ENCODE measurements at regions of chr11 and their contacts with region 1.

Region 1: DNA sequence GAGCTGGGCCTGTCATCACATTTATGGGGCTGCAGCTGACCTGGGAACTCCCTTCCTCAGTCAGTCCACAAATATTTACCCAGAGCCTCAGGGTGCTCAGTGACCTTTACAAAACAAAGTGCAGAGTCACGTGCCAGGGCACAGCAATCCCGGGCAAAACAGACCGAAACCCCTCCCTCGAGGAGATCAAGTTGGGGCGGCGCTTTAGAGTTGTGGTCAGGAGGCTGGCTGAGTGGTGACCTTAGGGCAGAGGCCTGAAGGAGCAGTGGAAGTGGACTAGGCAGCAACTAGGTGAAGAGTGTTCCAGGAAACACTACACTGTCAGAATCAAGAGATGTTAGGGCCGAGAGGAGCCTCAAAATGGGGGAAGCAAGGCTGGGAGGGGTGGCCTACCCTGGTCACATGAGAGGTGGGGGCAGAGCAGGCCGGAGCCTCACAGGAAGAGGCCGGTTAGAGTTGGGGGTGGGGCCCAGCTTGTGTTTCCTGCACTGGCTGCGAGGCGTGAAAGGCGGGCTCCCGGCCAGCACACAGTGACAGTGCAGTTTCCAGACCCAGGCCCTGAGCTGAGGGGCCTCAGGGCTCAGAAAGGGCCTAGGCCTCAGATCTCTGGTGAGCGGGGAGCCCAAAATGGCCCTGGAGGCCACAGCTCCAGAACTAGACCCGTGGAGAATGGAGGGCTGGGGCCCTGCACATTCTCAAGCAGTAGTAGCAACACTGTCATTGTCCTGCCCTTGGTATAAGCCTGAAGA is 3.7 kb upstream of the NEAT1 start:
- DNase-seq: peak; percentile 91
- ATAC-seq: peak; percentile 57
- H3K4me3 ChIP-seq: peak overlapping the region; percentile 79
- H3K27ac ChIP-seq: peak overlapping the region; percentile 100
- H3K4me1 ChIP-seq: peaks cover 51% of the 10 kb centered on the region
- H3K27me3 ChIP-seq: no peaks in the 10 kb centered on the region
- CTCF ChIP-seq: no peak
- EP300 ChIP-seq: peak; percentile 39 to 52; a peak in 3 of 4 replicates
- POLR2A ChIP-seq: peak; percentile 80
- RAD21 ChIP-seq: no peak

Region 2: DNA sequence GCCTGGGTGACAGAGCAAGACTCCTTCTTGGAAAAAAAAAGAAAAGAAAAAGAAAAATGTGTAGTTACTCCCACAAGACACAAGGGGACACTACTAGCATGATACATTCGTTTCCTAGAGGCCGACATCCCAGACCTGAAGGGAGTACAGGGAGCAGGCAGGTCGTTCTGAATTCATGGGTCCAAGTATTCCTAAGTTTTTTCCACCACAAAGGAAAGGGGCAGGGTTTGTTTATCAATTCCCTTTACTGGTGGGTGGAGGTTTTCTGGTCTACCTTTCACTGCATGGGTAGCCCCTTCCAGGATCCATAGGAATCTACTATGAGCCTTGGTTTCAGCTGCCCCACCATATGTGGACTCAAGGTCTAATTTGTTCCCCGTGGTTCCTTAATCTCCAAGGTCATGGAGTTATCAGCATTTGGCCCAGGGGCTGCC is 52.5 kb before region 1 on chr11:
- CTCF ChIA-PET with region 1: interaction called, 14 read pairs
- POLR2A ChIA-PET with region 1: interaction called, 3 read pairs
- RAD21 ChIA-PET with region 1: interaction called, 10 read pairs
- SMC1A ChIA-PET with region 1: interaction called, 7 read pairs
- in situ Hi-C with region 1: no loop called
- intact Hi-C with region 1: loop called (anchors 5 kb)
- DNase-seq: no peak
- ATAC-seq: peak; percentile 42
- H3K4me3 ChIP-seq: no peak overlapping the region
- H3K27ac ChIP-seq: no peak overlapping the region
- H3K4me1 ChIP-seq: peaks cover 16% of the 10 kb centered on the region
- H3K27me3 ChIP-seq: no peaks in the 10 kb centered on the region; a peak in 1 of 4 replicates
- CTCF ChIP-seq: peak; percentile 74 to 79 (median 76)
- EP300 ChIP-seq: no peak
- POLR2A ChIP-seq: no peak
- RAD21 ChIP-seq: peak; percentile 94

Region 3: DNA sequence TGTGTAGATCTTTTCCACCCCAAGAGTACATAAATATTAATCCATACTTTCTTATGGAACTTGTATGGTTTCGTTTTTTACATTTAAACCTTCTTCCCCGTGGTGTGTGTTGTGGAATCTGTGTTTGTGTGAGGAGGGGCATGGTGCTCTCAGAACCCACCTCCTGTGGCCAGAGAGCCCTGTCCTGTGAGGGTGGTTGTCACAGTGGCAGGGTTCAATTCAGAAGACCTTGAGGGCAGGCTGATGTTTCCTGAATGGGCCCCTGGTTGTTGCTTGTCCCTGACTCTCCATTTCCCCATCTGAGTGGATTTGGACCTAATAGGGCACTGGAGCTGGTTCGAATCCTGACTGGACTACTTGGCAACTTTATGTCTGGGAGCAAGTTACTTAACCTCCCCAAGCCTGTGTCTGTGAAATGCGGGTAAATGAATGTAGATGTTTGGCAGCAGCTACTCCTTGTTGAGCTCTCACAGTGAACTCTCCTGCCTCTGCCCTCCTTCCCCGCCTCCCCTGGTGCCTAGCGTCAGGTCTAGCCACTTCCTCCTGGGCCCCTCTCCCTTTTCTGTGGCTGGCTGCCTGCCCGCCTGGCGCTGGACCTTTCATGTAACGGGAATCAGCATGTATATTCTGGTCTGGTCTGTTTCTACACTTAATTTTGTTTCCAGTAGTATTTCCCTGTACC is 11.0 kb after region 1 on chr11:
- CTCF ChIA-PET with region 1: interaction called, 28 read pairs
- POLR2A ChIA-PET with region 1: interaction called, 21 read pairs
- RAD21 ChIA-PET with region 1: interaction called, 35 read pairs
- SMC1A ChIA-PET with region 1: interaction called, 24 read pairs
- in situ Hi-C with region 1: no loop called
- intact Hi-C with region 1: loop called (anchors 2 kb)
- DNase-seq: no peak
- ATAC-seq: peak; percentile 7
- H3K4me3 ChIP-seq: peak overlapping the region; percentile 95
- H3K27ac ChIP-seq: peak overlapping the region; percentile 100
- H3K4me1 ChIP-seq: peaks cover 42% of the 10 kb centered on the region
- H3K27me3 ChIP-seq: no peaks in the 10 kb centered on the region
- CTCF ChIP-seq: no peak
- EP300 ChIP-seq: no peak
- POLR2A ChIP-seq: peak; percentile 80
- RAD21 ChIP-seq: no peak

Region 4: GRCh38 chr11:65471410-65471762 is 52.5 kb after region 1 on chr11:
- CTCF ChIA-PET with region 1: interaction called, 362 read pairs
- POLR2A ChIA-PET with region 1: interaction called, 34 read pairs
- RAD21 ChIA-PET with region 1: interaction called, 224 read pairs
- SMC1A ChIA-PET with region 1: interaction called, 232 read pairs
- in situ Hi-C with region 1: no loop called
- intact Hi-C with region 1: loop called (anchors 1 kb)
- DNase-seq: no peak
- ATAC-seq: peak; percentile 65
- H3K4me3 ChIP-seq: 0 out of 2 replicates have a peak overlapping the region, but pooled peaks have one; percentile 31
- H3K27ac ChIP-seq: peak overlapping the region; percentile 76
- H3K4me1 ChIP-seq: peaks cover 28% of the 10 kb centered on the region
- H3K27me3 ChIP-seq: no peaks in the 10 kb centered on the region
- CTCF ChIP-seq: peak; percentile 67 to 76 (median 75)
- EP300 ChIP-seq: no peak
- POLR2A ChIP-seq: no peak
- RAD21 ChIP-seq: peak; percentile 65

Region 5: GRCh38 chr11:65497141-65498041 is 78.5 kb after region 1 on chr11:
- CTCF ChIA-PET with region 1: interaction called, 77 read pairs
- POLR2A ChIA-PET with region 1: interaction called, 323 read pairs
- RAD21 ChIA-PET with region 1: interaction called, 282 read pairs
- SMC1A ChIA-PET with region 1: interaction called, 115 read pairs
- in situ Hi-C with region 1: no loop called
- intact Hi-C with region 1: loop called (anchors 1 kb)
- DNase-seq: peak; percentile 95
- ATAC-seq: peak; percentile 71
- H3K4me3 ChIP-seq: peak overlapping the region; percentile 77
- H3K27ac ChIP-seq: peak overlapping the region; percentile 100
- H3K4me1 ChIP-seq: peaks cover 37% of the 10 kb centered on the region
- H3K27me3 ChIP-seq: no peaks in the 10 kb centered on the region
- CTCF ChIP-seq: no peak
- EP300 ChIP-seq: peak; percentile 86 to 98
- POLR2A ChIP-seq: peak; percentile 69
- RAD21 ChIP-seq: peak; percentile 24; the same call in 1 of the 2 replicates